ENCODE measurements at regions of chr15 and their contacts with region 1.

Region 1: GRCh38 chr15:66619151-66619903 is 53.5 kb upstream of the LCTL start:
- DNase-seq: peak; percentile 87
- ATAC-seq: peak; percentile 84

Region 2: DNA sequence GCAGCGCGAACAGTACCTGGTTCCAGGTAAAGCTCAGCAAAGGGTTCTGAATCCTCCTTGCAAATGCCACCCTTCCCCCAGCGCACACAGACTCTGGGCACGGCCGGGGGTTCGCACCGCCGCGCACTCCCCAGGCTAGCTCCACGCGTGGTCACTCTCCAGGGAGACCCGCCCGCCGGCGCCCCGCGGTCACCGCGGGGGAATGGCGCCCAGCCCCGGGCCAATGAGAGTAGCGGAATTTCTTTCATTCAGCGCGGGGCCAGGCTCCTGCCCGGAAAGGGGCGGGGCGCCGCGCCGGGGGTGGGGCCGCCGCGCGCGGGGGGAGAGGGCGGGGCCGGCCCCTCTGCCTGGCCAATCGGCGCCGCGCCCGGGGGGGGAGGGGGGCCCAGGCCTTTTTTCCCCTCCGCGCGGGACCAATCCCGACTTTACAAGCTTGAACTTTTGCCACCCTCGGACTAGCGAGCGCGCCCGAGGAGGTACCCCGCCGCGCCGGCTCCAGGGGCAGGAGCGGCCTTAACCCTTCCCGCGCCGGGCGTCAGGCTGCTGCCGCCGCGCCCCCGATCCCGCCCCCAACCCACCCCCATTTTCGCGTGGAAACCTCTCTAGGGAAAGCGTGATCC is 81.6 kb after region 1 on chr15:
- intact Hi-C with region 1: loop called (anchors 5 kb)
- DNase-seq: peak; percentile 97
- ATAC-seq: peak; percentile 88

Measured in sciatic nerve (tissue), 2 donors.